Naive thymus-derived CD8-positive, alpha-beta T cell (primary cell): ENCODE measurements at regions of chr1 and their contacts with region 1.

Region 1: GRCh38 chr1:211323156-211324063 is 3.2 kb upstream of the TRAF5 start:
- DNase-seq: peak in 9 of 10 donors; percentile 41 to 83 (median 70)
- ATAC-seq: peak; percentile 64 to 73
- H3K4me3 Mint-ChIP-seq: no peak overlapping the region
- H3K27ac Mint-ChIP-seq: peak overlapping the region in 1 of 10 donors; percentile 41
- H3K4me1 Mint-ChIP-seq: peaks cover 18 to 44% (median 34%) of the 10 kb centered on the region in 4 donors
- H3K27me3 Mint-ChIP-seq: no peaks in the 10 kb centered on the region

Region 2: DNA sequence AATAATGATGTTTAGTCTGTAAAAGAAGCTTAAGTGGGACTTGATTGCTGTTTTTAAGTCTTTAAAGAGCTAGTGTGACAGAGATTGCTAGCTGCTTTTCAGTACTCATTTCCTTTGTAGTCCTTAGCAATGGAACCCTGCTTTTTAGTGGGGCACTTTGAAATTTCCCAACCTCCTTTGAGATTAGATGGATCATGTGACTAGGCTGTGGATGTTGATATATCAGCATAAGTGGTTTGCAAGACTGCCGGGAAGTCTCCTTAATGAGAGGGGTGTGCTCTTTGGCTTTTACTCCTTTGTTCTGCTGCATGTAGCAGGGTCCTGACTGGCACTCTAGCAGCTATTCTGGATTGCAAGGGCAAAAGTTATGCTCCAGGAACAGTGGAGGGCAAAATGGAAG is 75.5 kb before region 1 on chr1:
- POLR2A ChIA-PET with region 1: no interaction called
- DNase-seq: peak in 1 of 10 donors; percentile 10
- ATAC-seq: no peak
- H3K4me3 Mint-ChIP-seq: no peak overlapping the region
- H3K27ac Mint-ChIP-seq: peak overlapping the region in 3 of 10 donors; percentile 48 to 63 (median 56)
- H3K4me1 Mint-ChIP-seq: peaks cover 0 to 9% (median 4%) of the 10 kb centered on the region in 4 donors
- H3K27me3 Mint-ChIP-seq: peaks cover 0 to 4% (median 2%) of the 10 kb centered on the region in 5 donors

Region 3: GRCh38 chr1:211258756-211259637 is 64.4 kb before region 1 on chr1 and contains the start of gene RCOR3:
- POLR2A ChIA-PET with region 1: interaction called, 10 read pairs
- DNase-seq: peak; percentile 83 to 94 (median 87)
- ATAC-seq: peak; percentile 72 to 75
- H3K4me3 Mint-ChIP-seq: peak within 1 kb of the TSS; percentile 90 to 96 (median 94)
- H3K27ac Mint-ChIP-seq: peak within 1 kb of the TSS; percentile 91 to 98 (median 96)
- H3K4me1 Mint-ChIP-seq: peaks cover 9 to 27% (median 25%) of the 10 kb centered on the region in 4 donors
- H3K27me3 Mint-ChIP-seq: no peaks in the 10 kb centered on the region
- polyA plus RNA-seq, gene RCOR3: 22.5 to 29.3 (median 24.7) TPM

Region 4: GRCh38 chr1:211335522-211336157 is 12.2 kb after region 1 on chr1:
- POLR2A ChIA-PET with region 1: interaction called, 50 read pairs
- DNase-seq: peak in 2 of 10 donors; percentile 25 to 41
- ATAC-seq: peak; percentile 78 to 85
- H3K4me3 Mint-ChIP-seq: peak overlapping the region; percentile 69 to 87 (median 82)
- H3K27ac Mint-ChIP-seq: peak overlapping the region; percentile 82 to 97 (median 91)
- H3K4me1 Mint-ChIP-seq: peaks cover 57 to 99% (median 95%) of the 10 kb centered on the region in 4 donors
- H3K27me3 Mint-ChIP-seq: no peaks in the 10 kb centered on the region

Region 5: GRCh38 chr1:211352985-211353515 is 29.6 kb after region 1 on chr1:
- POLR2A ChIA-PET with region 1: interaction called, 24 read pairs
- DNase-seq: peak in 9 of 10 donors; percentile 25 to 75 (median 46)
- ATAC-seq: peak; percentile 92 to 93
- H3K4me3 Mint-ChIP-seq: peak overlapping the region; percentile 66 to 92 (median 88)
- H3K27ac Mint-ChIP-seq: peak overlapping the region; percentile 53 to 96 (median 91)
- H3K4me1 Mint-ChIP-seq: peaks cover 32 to 80% (median 70%) of the 10 kb centered on the region in 4 donors
- H3K27me3 Mint-ChIP-seq: no peaks in the 10 kb centered on the region

Region 6: DNA sequence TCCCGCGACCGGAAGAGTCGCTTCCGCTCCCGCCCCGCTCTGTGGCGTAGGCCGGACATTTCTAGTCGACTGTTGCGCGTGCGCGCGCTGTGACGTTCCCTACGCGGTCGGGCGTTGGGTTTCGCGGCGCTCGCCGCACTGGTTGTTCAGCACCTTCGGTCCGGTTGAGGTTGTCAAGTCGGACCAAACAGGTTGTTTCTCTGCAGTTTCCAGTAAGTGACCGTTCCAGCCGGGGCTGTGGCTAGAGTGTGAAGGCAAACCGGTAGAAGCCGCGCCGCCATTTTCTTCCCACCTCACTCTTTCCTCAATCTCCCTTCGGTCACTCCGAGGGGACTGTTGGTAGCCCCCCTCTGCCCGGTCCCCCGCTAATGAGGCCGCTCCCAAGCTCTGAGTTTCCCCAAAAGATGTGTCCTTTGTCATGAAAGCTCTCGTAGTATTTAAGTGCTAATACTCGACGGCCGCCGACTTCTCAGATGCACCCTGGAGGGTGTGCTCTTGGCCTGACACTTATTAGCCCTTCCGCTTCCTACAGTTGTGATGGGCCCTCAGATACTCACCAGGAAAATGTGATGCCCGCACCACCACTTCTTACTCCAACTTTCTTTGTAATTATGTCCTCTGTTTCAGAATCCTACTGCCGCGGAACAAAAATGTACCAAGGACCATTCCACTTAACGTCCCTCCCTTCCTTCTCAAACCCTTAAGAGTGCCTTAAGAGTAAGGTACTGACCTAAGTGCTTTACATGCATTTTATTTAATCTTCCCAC is 59.5 kb after region 1 on chr1:
- POLR2A ChIA-PET with region 1: interaction called, 23 read pairs
- DNase-seq: peak; percentile 49 to 85 (median 67)
- ATAC-seq: peak; percentile 87 to 93
- H3K4me3 Mint-ChIP-seq: peak overlapping the region; percentile 81 to 97 (median 94)
- H3K27ac Mint-ChIP-seq: peak overlapping the region; percentile 94 to 99 (median 98)
- H3K4me1 Mint-ChIP-seq: peaks cover 14 to 26% (median 21%) of the 10 kb centered on the region in 4 donors
- H3K27me3 Mint-ChIP-seq: no peaks in the 10 kb centered on the region

Region 7: DNA sequence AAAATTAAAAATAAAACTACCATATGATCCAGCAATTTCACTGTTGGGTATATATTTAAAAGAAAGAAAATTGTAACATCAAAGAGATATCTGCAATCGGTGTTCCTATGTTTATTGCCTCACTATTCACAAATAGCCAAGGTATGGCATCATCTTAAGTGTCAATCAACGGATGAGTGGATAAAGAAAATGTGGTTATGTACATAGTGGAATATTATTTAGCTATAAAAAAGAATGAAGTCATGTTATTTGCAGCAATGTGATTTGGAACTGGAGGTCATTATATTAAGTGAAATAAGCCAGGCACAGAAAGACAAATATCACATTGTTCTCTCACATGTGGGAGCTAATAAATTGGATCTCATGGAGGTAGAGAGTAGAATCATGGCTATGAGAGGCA is 92.3 kb after region 1 on chr1:
- POLR2A ChIA-PET with region 1: interaction called, 12 read pairs
- DNase-seq: no peak
- ATAC-seq: no peak
- H3K4me3 Mint-ChIP-seq: peak overlapping the region; percentile 46 to 79 (median 70)
- H3K27ac Mint-ChIP-seq: peak overlapping the region in 6 of 10 donors; percentile 1 to 82 (median 64)
- H3K4me1 Mint-ChIP-seq: peaks cover 12 to 17% (median 14%) of the 10 kb centered on the region in 4 donors
- H3K27me3 Mint-ChIP-seq: peaks cover 0 to 1% (median 0%) of the 10 kb centered on the region in 5 donors